Activated CD4-positive, alpha-beta T cell treated with anti-CD3 and anti-CD28 coated beads for 36 hours (primary cell): ENCODE measurements at regions of chr11 and their contacts with region 1.

Region 1: GRCh38 chr11:50030193-50030592 is 2.5 kb upstream of the OR4C45 start:
- DNase-seq: no peak
- ATAC-seq: no peak
- H3K4me3 Mint-ChIP-seq: no peak overlapping the region
- H3K27ac Mint-ChIP-seq: no peak overlapping the region
- H3K4me1 Mint-ChIP-seq: no peaks in the 10 kb centered on the region
- H3K27me3 Mint-ChIP-seq: peaks cover 2% of the 10 kb centered on the region

Region 2: DNA sequence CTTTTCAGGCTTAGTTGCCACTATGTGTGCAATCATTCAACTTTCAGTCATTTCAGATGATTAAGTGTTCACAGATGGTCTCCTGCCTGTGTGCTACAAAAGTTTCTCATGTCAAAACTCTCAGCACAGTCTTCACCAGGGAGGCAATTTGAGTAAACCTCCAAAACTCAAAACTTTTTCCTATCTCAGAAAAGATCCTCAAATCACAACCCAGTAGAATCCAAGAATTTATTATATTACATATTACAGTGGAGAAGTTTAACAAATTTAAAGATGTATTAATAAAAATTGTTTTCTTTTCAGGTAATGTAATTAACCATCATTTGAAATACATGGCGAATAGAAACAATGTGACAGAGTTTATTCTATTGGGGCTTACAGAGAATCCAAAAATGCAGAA is 78.1 kb before region 1 on chr11 and contains the start of gene OR4C13:
- CTCF ChIA-PET with region 1: no interaction called
- POLR2A ChIA-PET with region 1: no interaction called
- intact Hi-C with region 1: no loop called
- DNase-seq: no peak
- ATAC-seq: no peak
- H3K4me3 Mint-ChIP-seq: no peak within 1 kb of the TSS
- H3K27ac Mint-ChIP-seq: no peak within 1 kb of the TSS
- H3K4me1 Mint-ChIP-seq: no peaks in the 10 kb centered on the region
- H3K27me3 Mint-ChIP-seq: no peaks in the 10 kb centered on the region
- total RNA-seq, gene OR4C13: not detected

Region 3: DNA sequence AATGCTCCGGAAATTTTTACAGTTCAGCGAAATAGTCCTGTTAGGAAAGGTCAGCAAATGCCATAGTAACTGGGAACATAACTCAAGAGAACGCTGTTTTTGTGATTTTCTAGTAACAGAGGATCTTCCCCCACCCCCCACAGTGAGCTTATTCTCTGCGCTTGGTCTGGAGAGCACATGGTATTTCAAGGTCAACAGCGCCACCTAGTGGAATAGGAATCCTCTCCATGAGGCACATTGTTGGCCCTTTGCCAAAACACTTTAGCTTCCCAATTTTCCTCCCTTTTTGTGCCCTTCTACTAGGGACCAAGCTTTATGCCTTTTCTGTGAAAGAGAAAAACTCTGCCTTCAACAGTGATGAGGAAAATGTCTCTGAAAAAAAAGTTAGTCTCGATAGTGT is 34.6 kb before region 1 on chr11:
- CTCF ChIA-PET with region 1: no interaction called
- POLR2A ChIA-PET with region 1: no interaction called
- intact Hi-C with region 1: no loop called
- DNase-seq: peak; percentile 65
- ATAC-seq: no peak
- H3K4me3 Mint-ChIP-seq: no peak overlapping the region
- H3K27ac Mint-ChIP-seq: no peak overlapping the region
- H3K4me1 Mint-ChIP-seq: no peaks in the 10 kb centered on the region
- H3K27me3 Mint-ChIP-seq: no peaks in the 10 kb centered on the region

Region 4: GRCh38 chr11:50044647-50045046 is 14.5 kb after region 1 on chr11:
- CTCF ChIA-PET with region 1: no interaction called
- POLR2A ChIA-PET with region 1: no interaction called
- intact Hi-C with region 1: loop called in 1 of 2 experiments (anchors 2 kb)
- DNase-seq: no peak
- ATAC-seq: no peak
- H3K4me3 Mint-ChIP-seq: no peak overlapping the region
- H3K27ac Mint-ChIP-seq: no peak overlapping the region
- H3K4me1 Mint-ChIP-seq: no peaks in the 10 kb centered on the region
- H3K27me3 Mint-ChIP-seq: no peaks in the 10 kb centered on the region